Ascending aorta (tissue), 2 donors: ENCODE measurements at regions of chr19 and their contacts with region 1.

Region 1: GRCh38 chr19:11558881-11559828 is at the start of gene ELOF1:
- DNase-seq: peak; percentile 93 to 98
- H3K4me3 ChIP-seq: peak within 1 kb of the TSS; percentile 56 to 76
- H3K27ac ChIP-seq: peak within 1 kb of the TSS; percentile 62 to 64
- H3K4me1 ChIP-seq: peaks cover 7 to 25% of the 10 kb centered on the region in 2 donors
- H3K27me3 ChIP-seq: no peaks in the 10 kb centered on the region
- CTCF ChIP-seq: peak in 2 of 3 experiments; percentile 10 to 24
- total RNA-seq, gene ELOF1: 28.9 TPM

Region 2: DNA sequence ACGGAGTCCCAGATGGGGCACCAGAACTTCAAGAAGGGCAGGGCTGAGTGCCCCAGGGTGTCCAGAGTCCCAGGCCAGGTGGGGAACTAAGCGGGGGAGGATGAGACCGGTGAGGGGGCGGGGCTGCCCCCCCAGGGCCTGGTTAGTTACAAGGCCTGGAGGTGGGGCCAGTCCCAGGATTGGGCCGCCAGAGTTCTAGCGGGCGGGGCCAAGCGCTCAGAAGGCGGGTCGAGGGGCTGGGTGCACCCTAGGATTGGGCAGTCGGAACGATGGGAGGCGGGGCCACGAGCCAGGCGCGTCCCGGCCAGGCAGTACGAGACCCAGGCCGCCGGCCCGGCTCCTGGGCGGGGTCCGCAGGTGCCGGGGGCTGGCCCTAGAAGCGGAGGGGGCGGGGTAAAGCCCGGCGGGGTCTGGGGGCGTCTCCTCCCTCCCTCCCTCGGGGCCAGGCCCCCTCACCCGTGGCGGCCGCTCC is 54.1 kb before region 1 on chr19:
- intact Hi-C with region 1: no loop called
- DNase-seq: peak; percentile 93 to 98
- H3K4me3 ChIP-seq: peak overlapping the region; percentile 84 to 94
- H3K27ac ChIP-seq: peak overlapping the region; percentile 95 to 97
- H3K4me1 ChIP-seq: peaks cover 2 to 6% of the 10 kb centered on the region in 2 donors
- H3K27me3 ChIP-seq: no peaks in the 10 kb centered on the region
- CTCF ChIP-seq: no peak

Region 3: GRCh38 chr19:11528551-11529341 is 30.4 kb before region 1 on chr19 and contains the start of gene ECSIT:
- intact Hi-C with region 1: loop called (anchors 1 kb)
- DNase-seq: peak; percentile 94 to 100
- H3K4me3 ChIP-seq: peak within 1 kb of the TSS; percentile 57 to 73
- H3K27ac ChIP-seq: peak within 1 kb of the TSS; percentile 92 to 94
- H3K4me1 ChIP-seq: peaks cover 6 to 12% of the 10 kb centered on the region in 2 donors
- H3K27me3 ChIP-seq: no peaks in the 10 kb centered on the region
- CTCF ChIP-seq: peak in 1 of 3 experiments; percentile 16
- total RNA-seq, gene ECSIT: 27.5 TPM

Region 4: DNA sequence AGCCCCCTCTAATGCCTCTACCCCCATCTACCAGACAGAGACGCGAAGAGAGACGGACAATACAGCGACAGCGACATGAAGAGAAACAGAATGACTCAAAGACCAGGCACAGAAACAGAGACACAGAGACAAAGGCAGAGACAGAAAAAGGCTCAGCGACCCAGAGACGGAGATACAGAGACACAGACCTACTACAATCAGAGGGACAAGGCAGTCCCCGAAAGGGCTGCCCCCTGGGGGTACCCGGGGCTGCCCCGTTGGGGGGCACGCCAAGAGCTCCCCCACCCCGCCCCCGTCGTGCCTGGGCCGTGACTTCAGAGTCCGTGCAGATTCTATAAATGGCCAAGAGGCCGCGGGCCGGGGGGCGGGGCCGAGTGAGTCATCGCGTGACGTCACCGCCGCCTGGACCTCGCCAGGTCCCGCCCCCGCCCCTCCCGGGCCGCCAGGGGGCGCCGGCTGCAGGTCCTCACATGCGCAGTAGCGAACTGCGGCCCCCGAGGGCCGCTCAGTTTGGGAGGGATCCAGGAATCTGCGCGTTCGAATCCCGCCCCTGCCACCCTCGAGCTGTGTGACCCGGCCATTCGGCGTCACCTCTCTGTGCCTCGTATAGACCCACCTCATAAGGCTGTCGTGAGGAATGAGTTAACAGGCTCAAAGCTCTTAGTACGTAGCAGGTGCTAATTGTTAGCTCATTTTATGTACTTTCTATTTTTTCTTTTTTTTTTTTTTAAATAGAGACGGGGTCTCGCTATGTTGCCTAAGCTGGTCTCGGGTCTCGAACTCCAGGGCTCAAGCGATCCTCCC is 23.2 kb before region 1 on chr19:
- intact Hi-C with region 1: loop called (anchors 2 kb)
- DNase-seq: peak; percentile 78 to 96
- H3K4me3 ChIP-seq: peak overlapping the region; percentile 37 to 55
- H3K27ac ChIP-seq: peak overlapping the region; percentile 95 to 97
- H3K4me1 ChIP-seq: peaks cover 7 to 20% of the 10 kb centered on the region in 2 donors
- H3K27me3 ChIP-seq: no peaks in the 10 kb centered on the region
- CTCF ChIP-seq: peak; percentile 91 to 98 (median 93)

Region 5: GRCh38 chr19:11597202-11598102 is 38.3 kb after region 1 on chr19 and contains the start of gene ZNF627:
- intact Hi-C with region 1: loop called (anchors 5 kb)
- DNase-seq: peak; percentile 99 to 100
- H3K4me3 ChIP-seq: peak within 1 kb of the TSS; percentile 73 to 100
- H3K27ac ChIP-seq: peak within 1 kb of the TSS; percentile 79 to 81
- H3K4me1 ChIP-seq: peaks cover 3 to 15% of the 10 kb centered on the region in 2 donors
- H3K27me3 ChIP-seq: no peaks in the 10 kb centered on the region
- CTCF ChIP-seq: peak in 2 of 3 experiments; percentile 13 to 38
- total RNA-seq, gene ZNF627: 7.6 TPM